Heart left ventricle (tissue), 16 donors: ENCODE measurements at regions of chr1 and their contacts with region 1.

Region 1: GRCh38 chr1:179816196-179816960 is 61.2 kb downstream of the TOR1AIP2 start:
- DNase-seq: peak; percentile 67 to 79 (median 73)
- ATAC-seq: peak in 2 of 4 donors; percentile 12 to 38
- H3K4me3 ChIP-seq: peak overlapping the region in 3 of 12 donors; percentile 45 to 61 (median 57)
- H3K27ac ChIP-seq: peak overlapping the region in 10 of 12 donors; percentile 13 to 67 (median 60)
- H3K4me1 ChIP-seq: peaks cover 0 to 43% (median 27%) of the 10 kb centered on the region in 12 donors
- H3K27me3 ChIP-seq: peaks cover 0 to 15% (median 0%) of the 10 kb centered on the region in 9 donors
- CTCF ChIP-seq: no peak
- POLR2A ChIP-seq: no peak

Region 2: GRCh38 chr1:179882243-179883039 is 66.1 kb after region 1 on chr1 and contains the start of gene TOR1AIP1:
- intact Hi-C with region 1: loop called in 1 of 10 experiments (anchors 5 kb)
- DNase-seq: peak; percentile 97 to 99 (median 98)
- ATAC-seq: peak; percentile 93 to 96 (median 95)
- H3K4me3 ChIP-seq: peak within 1 kb of the TSS; percentile 72 to 88 (median 82)
- H3K27ac ChIP-seq: peak within 1 kb of the TSS; percentile 98 to 100 (median 99)
- H3K4me1 ChIP-seq: peaks cover 0 to 58% (median 38%) of the 10 kb centered on the region in 12 donors
- H3K27me3 ChIP-seq: no peaks in the 10 kb centered on the region
- CTCF ChIP-seq: peak in 11 of 12 donors; percentile 29 to 58 (median 51)
- POLR2A ChIP-seq: peak; percentile 3 to 88
- total RNA-seq, gene TOR1AIP1: 25.4 to 68.2 (median 47.4) TPM

Region 3: DNA sequence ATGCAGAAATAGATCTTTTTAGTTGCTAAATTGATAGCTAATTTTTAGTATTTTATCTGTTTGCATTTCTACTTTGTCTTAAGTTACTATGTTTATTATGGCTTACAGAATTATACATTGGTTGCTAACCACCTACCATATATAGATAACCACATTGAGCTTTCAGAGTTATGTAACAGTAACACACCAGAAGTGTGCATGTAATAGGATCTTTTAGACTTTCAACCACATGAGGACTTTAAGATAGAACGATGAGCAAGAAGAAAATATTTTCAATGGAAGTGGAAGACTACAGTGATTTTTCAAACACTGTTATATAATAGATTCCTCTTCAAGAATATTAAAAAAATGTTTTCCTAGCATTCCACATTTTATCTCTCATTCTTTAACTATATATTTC is 94.6 kb after region 1 on chr1:
- intact Hi-C with region 1: no loop called
- DNase-seq: no peak
- ATAC-seq: no peak
- H3K4me3 ChIP-seq: no peak overlapping the region
- H3K27ac ChIP-seq: no peak overlapping the region
- H3K4me1 ChIP-seq: no peaks in the 10 kb centered on the region
- H3K27me3 ChIP-seq: no peaks in the 10 kb centered on the region
- CTCF ChIP-seq: no peak
- POLR2A ChIP-seq: no peak